GM12878 (cell line): ENCODE measurements at regions of chrX and their contacts with region 1.

Region 1: GRCh38 chrX:989959-990510 is 222.4 kb downstream of the CRLF2 start:
- DNase-seq: peak; percentile 97
- ATAC-seq: peak; percentile 98
- H3K4me3 ChIP-seq: peak overlapping the region; percentile 67
- H3K27ac ChIP-seq: peak overlapping the region; percentile 1; the same call in 1 of the 2 replicates
- H3K4me1 ChIP-seq: no peaks in the 10 kb centered on the region
- H3K27me3 ChIP-seq: no peaks in the 10 kb centered on the region
- CTCF ChIP-seq: no peak
- EP300 ChIP-seq: no peak
- POLR2A ChIP-seq: peak; percentile 61
- RAD21 ChIP-seq: no peak

Region 2: DNA sequence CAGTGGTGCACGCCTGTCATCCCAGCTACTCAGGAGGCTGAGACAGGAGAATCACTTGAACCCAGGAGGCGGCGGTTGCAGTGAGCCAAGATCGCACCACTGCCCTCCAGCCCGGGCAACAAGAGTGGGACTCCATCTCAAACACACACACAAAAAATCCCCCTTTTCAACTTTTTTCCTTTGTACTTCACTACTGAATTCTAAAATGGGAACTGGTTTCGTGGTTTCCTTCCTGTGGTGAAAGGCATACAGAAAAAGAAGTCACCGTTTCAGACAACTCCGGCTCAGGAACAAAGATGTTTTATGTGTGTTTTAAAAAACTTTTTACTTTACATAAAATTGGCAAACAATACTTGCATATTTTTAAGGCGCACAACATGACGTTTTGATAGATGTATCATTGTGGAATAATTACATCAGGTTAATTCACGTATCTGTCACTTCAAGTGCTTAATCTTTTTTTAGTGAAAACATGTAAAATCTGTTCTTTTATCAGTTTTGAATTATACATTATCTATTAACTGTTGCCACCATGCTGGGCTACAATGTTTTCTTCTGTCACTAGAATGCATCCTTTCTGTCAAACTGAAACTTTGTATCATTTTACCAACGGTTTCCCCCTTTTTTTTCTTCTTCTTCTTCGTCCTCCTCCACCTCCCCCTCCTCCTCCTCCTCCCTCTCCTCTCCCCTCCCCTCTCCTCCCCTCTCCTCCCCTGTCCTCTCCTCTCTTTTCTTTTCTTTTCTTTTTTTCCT is 36.4 kb after region 1 on chrX:
- CTCF ChIA-PET with region 1: no interaction called
- POLR2A ChIA-PET with region 1: no interaction called
- RAD21 ChIA-PET with region 1: no interaction called
- SMC1A ChIA-PET with region 1: no interaction called
- in situ Hi-C with region 1: loop called (anchors 5 kb)
- intact Hi-C with region 1: loop called (anchors 2 kb)
- DNase-seq: peak; percentile 63
- ATAC-seq: peak; percentile 81
- H3K4me3 ChIP-seq: 0 out of 2 replicates have a peak overlapping the region, but pooled peaks have one; percentile 22
- H3K27ac ChIP-seq: peak overlapping the region; percentile 86
- H3K4me1 ChIP-seq: peaks cover 10% of the 10 kb centered on the region
- H3K27me3 ChIP-seq: no peaks in the 10 kb centered on the region
- CTCF ChIP-seq: no peak
- EP300 ChIP-seq: no peak; a peak in 1 of 4 replicates
- POLR2A ChIP-seq: no peak
- RAD21 ChIP-seq: no peak

Region 3: DNA sequence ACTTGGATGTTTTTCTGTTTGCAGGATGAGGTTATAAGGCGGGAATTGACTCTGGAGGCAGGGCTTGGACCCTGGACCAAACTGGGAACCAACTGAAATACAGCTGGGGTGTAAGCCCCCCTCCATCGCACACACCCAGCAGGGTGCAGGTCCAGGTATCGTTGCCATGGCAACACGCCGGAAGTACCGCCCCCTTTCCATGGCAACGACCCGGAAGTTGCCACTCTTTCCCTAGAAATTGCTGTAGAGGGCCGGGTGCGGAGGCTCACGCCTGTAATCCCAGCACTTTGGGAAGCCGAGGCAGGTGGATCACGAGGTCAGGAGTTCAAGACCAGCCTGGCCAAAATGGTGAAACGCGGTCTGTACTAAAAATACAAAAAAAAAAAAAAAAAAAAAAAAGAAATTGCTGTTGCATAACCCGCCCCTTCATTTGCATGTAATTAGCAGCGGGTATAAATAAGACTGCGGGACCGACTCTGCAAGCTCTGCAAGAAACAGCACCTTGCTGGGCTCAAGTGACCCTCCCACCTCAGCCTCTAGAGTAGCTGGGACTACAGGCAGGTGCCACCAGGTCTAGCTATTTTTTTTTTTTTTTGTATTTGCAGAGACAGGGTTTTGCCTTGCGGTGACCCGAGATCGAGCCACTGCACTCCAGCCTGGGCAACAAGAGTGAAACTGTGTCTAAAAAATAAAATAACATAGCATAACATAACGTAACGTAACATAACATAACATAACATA is 82.8 kb after region 1 on chrX:
- CTCF ChIA-PET with region 1: no interaction called
- POLR2A ChIA-PET with region 1: no interaction called
- RAD21 ChIA-PET with region 1: no interaction called
- SMC1A ChIA-PET with region 1: no interaction called
- in situ Hi-C with region 1: no loop called
- intact Hi-C with region 1: no loop called
- DNase-seq: no peak
- ATAC-seq: no peak
- H3K4me3 ChIP-seq: no peak overlapping the region
- H3K27ac ChIP-seq: no peak overlapping the region
- H3K4me1 ChIP-seq: no peaks in the 10 kb centered on the region
- H3K27me3 ChIP-seq: no peaks in the 10 kb centered on the region
- CTCF ChIP-seq: no peak
- EP300 ChIP-seq: no peak
- POLR2A ChIP-seq: no peak
- RAD21 ChIP-seq: no peak

Region 4: DNA sequence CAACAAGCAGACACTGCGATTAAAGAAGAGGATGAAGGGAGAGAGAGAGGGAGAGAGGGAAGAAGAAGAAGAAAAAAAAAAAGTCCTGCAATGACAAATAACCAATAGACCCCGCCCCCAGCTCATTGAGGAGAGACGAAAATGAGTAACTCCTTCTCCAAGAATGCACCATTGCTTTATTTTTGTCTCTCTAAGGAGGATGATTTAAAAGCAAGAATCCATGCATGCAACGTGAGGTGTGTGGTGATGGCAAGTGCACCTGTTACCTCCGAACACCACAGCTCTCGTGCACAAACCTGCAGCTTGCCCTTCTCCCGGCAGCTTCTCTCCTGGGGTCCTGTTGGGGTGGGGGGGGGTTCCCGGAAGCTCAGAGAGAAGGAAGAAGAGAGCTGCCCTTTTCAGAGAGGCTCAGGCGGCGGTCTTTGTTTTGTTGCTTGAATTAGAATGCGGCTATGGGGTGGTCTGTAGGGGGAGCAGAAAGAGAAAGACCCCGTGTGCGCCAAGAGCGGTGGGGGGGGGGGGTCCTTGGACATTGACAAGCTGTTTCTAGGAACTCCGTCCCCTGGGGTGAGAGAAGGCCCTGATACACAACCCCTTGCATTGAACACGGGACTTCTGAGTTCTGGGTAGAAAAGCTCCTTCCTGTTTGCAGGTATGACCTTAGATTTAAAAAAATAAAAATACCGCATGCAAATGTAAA is 121.7 kb after region 1 on chrX:
- CTCF ChIA-PET with region 1: no interaction called
- POLR2A ChIA-PET with region 1: no interaction called
- RAD21 ChIA-PET with region 1: no interaction called
- SMC1A ChIA-PET with region 1: no interaction called
- in situ Hi-C with region 1: no loop called
- intact Hi-C with region 1: loop called (anchors 10 kb)
- DNase-seq: no peak
- ATAC-seq: no peak
- H3K4me3 ChIP-seq: no peak overlapping the region
- H3K27ac ChIP-seq: no peak overlapping the region
- H3K4me1 ChIP-seq: no peaks in the 10 kb centered on the region; the same call in 1 of the 2 replicates
- H3K27me3 ChIP-seq: no peaks in the 10 kb centered on the region
- CTCF ChIP-seq: no peak
- EP300 ChIP-seq: no peak
- POLR2A ChIP-seq: no peak
- RAD21 ChIP-seq: no peak

Region 5: DNA sequence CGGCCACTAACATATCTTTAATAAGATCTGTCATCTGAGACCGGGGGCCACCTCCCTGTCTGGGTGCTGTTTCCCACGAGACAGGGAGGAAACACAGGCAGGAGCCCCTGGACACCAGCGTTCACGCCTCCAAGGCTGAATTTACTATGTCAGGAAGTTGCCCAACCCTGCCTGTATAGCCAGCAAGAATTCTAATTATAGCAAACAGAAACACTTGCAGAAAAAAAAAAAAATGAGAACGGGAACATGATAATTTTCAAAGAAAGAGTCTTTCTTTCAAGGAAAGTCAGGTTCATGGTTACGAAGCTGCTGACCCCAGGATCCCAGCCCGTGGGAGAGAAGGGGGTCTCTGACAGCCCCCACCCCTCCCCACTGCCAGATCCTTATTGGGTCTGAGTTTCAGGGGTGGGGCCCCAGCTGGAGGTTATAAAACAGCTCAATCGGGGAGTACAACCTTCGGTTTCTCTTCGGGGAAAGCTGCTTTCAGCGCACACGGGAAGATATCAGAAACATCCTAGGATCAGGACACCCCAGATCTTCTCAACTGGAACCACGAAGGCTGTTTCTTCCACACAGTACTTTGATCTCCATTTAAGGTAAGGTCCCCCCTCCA is 346.4 kb after region 1 on chrX and contains the start of gene IL3RA:
- CTCF ChIA-PET with region 1: no interaction called
- POLR2A ChIA-PET with region 1: no interaction called
- RAD21 ChIA-PET with region 1: no interaction called
- SMC1A ChIA-PET with region 1: no interaction called
- in situ Hi-C with region 1: loop called (anchors 10 kb)
- intact Hi-C with region 1: no loop called
- DNase-seq: peak; percentile 52
- ATAC-seq: peak; percentile 81
- H3K4me3 ChIP-seq: peak within 1 kb of the TSS; percentile 75
- H3K27ac ChIP-seq: peak within 1 kb of the TSS; percentile 77
- H3K4me1 ChIP-seq: peaks cover 7% of the 10 kb centered on the region; the same call in 1 of the 2 replicates
- H3K27me3 ChIP-seq: no peaks in the 10 kb centered on the region
- CTCF ChIP-seq: no peak
- EP300 ChIP-seq: peak in 1 of 2 experiments; percentile 19; a peak in 1 of 4 replicates
- POLR2A ChIP-seq: peak; percentile 67
- RAD21 ChIP-seq: no peak
- polyA plus RNA-seq, gene IL3RA: 2.1 to 4.5 TPM